AG04449 (cell line): ENCODE measurements at regions of chr5 and their contacts with region 1.

Region 1: DNA sequence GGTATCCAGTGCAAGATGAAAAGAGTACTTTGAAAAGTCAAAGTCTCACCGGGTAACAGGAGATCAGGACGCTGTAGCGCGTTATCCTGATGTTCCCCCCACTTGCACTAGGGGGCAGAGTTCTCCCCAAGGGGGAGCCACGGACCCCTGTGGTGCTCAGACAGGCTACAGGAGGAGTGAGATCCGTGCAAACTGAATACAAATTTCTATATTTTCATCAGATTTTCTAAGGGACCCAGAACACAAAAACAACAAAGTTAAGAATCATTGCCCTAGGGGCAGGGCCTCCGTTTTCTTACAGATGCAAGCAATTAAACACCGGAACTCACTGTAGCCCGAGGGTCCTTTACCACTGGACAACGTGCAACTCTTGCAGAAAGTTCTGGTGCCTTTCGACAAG is 2.0 kb downstream of the MYO10 start:
- DNase-seq: no peak
- H3K4me3 ChIP-seq: peak overlapping the region; percentile 67
- CTCF ChIP-seq: peak; percentile 93

Region 2: DNA sequence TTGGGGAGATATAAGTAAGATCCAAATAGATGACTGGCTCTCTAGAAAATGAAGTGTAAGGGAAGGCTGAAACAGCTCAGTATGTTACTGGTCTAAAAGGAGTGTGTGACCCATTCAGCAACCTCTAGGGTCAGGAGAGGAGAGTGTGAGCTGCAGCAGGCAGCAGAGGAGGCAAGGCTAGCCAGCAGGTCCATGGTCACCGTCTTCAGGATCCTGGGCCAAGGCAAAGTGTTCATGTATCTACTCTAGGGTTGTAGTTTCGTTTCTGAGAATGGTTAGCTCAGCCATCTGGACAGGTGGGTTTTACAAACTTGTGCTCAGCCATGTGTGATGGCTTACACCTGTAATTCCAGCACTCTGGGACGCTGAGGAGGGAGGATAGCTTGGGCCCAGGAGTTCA is 11.7 kb before region 1 on chr5:
- CTCF ChIA-PET with region 1: interaction called, 60 read pairs
- POLR2A ChIA-PET with region 1: interaction called, 3 read pairs
- DNase-seq: no peak
- H3K4me3 ChIP-seq: no peak overlapping the region
- CTCF ChIP-seq: no peak

Region 3: GRCh38 chr5:16944816-16945562 is 10.9 kb after region 1 on chr5:
- CTCF ChIA-PET with region 1: interaction called, 12 read pairs
- POLR2A ChIA-PET with region 1: no interaction called
- DNase-seq: no peak
- H3K4me3 ChIP-seq: no peak overlapping the region
- CTCF ChIP-seq: no peak

Region 4: GRCh38 chr5:17180957-17181723 is 247.0 kb after region 1 on chr5:
- CTCF ChIA-PET with region 1: interaction called, 190 read pairs
- POLR2A ChIA-PET with region 1: interaction called, 12 read pairs
- DNase-seq: peak; percentile 98
- H3K4me3 ChIP-seq: no peak overlapping the region
- CTCF ChIP-seq: no peak